Activated CD4-positive, alpha-beta memory T cell treated with anti-CD3 and anti-CD28 coated beads for 36 hours (primary cell): ENCODE measurements at regions of chr3 and their contacts with region 1.

Region 1: DNA sequence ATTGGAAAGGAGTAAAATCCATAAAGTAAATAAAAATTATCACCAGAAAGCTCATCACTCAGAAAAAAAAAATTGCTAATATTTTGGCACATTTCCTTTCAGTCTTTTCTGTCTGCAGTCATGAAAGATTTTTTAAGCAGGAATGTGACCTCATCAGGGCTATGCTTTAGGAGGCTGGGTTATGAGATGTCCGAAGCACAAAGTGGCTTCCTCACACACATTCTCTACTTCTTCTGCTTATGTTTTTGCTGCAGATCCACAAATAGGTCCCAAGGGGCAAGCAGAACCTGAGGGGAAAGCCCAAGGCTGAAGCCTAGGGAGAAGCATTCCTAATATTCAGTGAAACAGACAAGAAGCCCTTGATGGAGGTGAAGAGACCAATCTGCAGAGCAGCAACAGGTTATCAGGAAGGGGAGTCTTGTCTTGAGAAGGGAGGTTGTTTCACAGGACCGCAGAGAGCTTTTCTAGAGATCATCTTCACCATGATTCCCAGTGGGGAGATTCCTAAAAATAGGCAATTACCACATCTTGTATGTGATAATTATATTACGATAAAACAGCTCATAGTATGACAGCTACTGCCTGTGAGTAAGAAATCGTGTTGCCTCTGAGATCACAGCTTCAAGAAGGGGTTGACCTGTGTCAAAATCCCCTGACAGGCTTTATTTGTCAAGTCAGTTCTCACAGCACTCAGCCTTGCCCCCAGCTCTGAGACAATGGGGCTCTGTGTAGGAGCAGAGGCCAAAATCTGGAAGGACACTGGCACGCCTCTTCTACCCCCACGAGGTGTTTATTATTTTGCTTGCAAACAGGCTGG is 60.5 kb downstream of the IGF2BP2 start:
- DNase-seq: no peak
- H3K4me3 Mint-ChIP-seq: no peak overlapping the region
- H3K27ac Mint-ChIP-seq: no peak overlapping the region
- H3K4me1 Mint-ChIP-seq: no peaks in the 10 kb centered on the region
- H3K27me3 Mint-ChIP-seq: peaks cover 22% of the 10 kb centered on the region

Region 2: GRCh38 chr3:185677146-185677829 is 87.1 kb before region 1 on chr3:
- CTCF ChIA-PET with region 1: interaction called, 15 read pairs
- POLR2A ChIA-PET with region 1: no interaction called
- intact Hi-C with region 1: loop called (anchors 1 kb)
- DNase-seq: no peak
- H3K4me3 Mint-ChIP-seq: no peak overlapping the region
- H3K27ac Mint-ChIP-seq: no peak overlapping the region
- H3K4me1 Mint-ChIP-seq: no peaks in the 10 kb centered on the region
- H3K27me3 Mint-ChIP-seq: peaks cover 21% of the 10 kb centered on the region

Region 3: GRCh38 chr3:185744997-185745843 is 19.2 kb before region 1 on chr3:
- CTCF ChIA-PET with region 1: interaction called, 13 read pairs
- POLR2A ChIA-PET with region 1: no interaction called
- intact Hi-C with region 1: no loop called
- DNase-seq: no peak
- H3K4me3 Mint-ChIP-seq: no peak overlapping the region
- H3K27ac Mint-ChIP-seq: no peak overlapping the region
- H3K4me1 Mint-ChIP-seq: peaks cover 1% of the 10 kb centered on the region
- H3K27me3 Mint-ChIP-seq: peaks cover 18% of the 10 kb centered on the region

Region 4: DNA sequence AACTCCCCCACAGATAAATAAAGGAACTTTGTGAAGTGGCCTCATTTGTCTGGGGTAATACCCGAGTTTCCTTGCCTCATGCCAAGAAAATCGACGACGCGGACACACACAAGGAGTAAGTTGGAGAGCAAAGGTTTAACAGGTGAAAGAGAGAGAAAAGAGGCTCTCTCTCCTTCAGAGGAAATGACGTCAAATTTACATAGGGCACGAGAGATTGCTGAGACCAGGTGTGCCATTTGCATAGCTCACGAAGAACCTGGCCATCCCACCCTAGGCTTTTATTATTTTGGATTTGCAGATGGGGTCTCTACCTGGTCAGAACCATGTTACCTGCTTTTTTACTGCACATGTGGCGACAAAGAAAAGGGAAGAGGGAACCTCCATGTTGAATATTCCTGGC is 109.7 kb after region 1 on chr3:
- CTCF ChIA-PET with region 1: no interaction called
- POLR2A ChIA-PET with region 1: no interaction called
- intact Hi-C with region 1: no loop called
- DNase-seq: no peak
- H3K4me3 Mint-ChIP-seq: no peak overlapping the region
- H3K27ac Mint-ChIP-seq: no peak overlapping the region
- H3K4me1 Mint-ChIP-seq: no peaks in the 10 kb centered on the region
- H3K27me3 Mint-ChIP-seq: peaks cover 3% of the 10 kb centered on the region

Region 5: GRCh38 chr3:186320862-186321568 is 556.6 kb after region 1 on chr3:
- CTCF ChIA-PET with region 1: no interaction called
- POLR2A ChIA-PET with region 1: no interaction called
- intact Hi-C with region 1: no loop called
- DNase-seq: no peak
- H3K4me3 Mint-ChIP-seq: no peak overlapping the region
- H3K27ac Mint-ChIP-seq: no peak overlapping the region
- H3K4me1 Mint-ChIP-seq: no peaks in the 10 kb centered on the region
- H3K27me3 Mint-ChIP-seq: peaks cover 5% of the 10 kb centered on the region